Sigmoid colon (tissue), 7 donors: ENCODE measurements at regions of chr3 and their contacts with region 1.

Region 1: GRCh38 chr3:22960105-22960984 is 242.8 kb upstream of the UBE2E2 start:
- DNase-seq: peak; percentile 68
- H3K4me3 ChIP-seq: no peak overlapping the region
- H3K27ac ChIP-seq: no peak overlapping the region
- H3K4me1 ChIP-seq: peaks cover 0 to 11% (median 6%) of the 10 kb centered on the region in 4 donors
- H3K27me3 ChIP-seq: no peaks in the 10 kb centered on the region
- CTCF ChIP-seq: peak; percentile 39 to 73 (median 60)
- EP300 ChIP-seq: no peak
- POLR2A ChIP-seq: no peak

Region 2: DNA sequence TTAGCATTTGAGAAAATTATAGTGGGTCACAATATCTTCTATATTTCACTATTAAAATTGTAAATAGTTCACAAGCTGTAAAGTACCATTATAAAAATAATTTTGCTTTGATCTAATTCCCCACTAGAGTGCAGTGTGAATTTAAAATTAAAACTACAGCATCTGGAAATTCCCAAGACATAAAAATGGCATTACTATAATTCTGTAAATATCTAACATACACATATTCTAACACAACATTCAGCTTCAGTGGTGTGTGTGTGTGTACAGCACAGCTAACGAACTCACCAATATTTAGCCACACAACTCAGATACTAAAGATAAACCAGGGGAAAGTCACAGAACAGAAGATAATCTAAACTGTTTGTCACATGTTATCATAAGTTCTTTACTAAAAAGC is 784.4 kb before region 1 on chr3:
- intact Hi-C with region 1: loop called (anchors 10 kb)
- DNase-seq: no peak
- H3K4me3 ChIP-seq: no peak overlapping the region
- H3K27ac ChIP-seq: no peak overlapping the region
- H3K4me1 ChIP-seq: no peaks in the 10 kb centered on the region
- H3K27me3 ChIP-seq: no peaks in the 10 kb centered on the region
- CTCF ChIP-seq: no peak
- EP300 ChIP-seq: no peak
- POLR2A ChIP-seq: no peak

Region 3: DNA sequence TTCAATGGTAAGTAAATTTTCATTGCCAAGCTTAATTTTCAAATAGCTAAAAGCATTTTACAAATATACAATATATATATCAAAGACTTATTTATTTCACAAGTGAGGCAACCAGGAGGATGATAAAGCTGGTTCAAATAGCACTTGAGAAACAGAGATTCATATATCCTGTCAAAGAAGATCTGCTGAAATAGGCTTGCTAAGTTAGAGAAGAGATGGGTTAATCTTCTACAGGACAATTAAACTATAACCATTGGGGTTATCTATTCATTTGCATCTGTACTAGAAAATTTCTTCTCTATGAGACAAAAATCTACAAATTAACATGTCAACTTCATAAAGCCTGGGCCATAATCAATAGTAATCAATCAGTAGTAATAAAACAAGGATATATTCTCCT is 395.0 kb before region 1 on chr3:
- intact Hi-C with region 1: loop called (anchors 2 kb)
- DNase-seq: no peak
- H3K4me3 ChIP-seq: no peak overlapping the region
- H3K27ac ChIP-seq: no peak overlapping the region
- H3K4me1 ChIP-seq: no peaks in the 10 kb centered on the region
- H3K27me3 ChIP-seq: no peaks in the 10 kb centered on the region
- CTCF ChIP-seq: no peak
- EP300 ChIP-seq: no peak
- POLR2A ChIP-seq: no peak

Region 4: GRCh38 chr3:22908989-22909507 is 51.3 kb before region 1 on chr3:
- intact Hi-C with region 1: loop called (anchors 5 kb)
- DNase-seq: no peak
- H3K4me3 ChIP-seq: no peak overlapping the region
- H3K27ac ChIP-seq: no peak overlapping the region
- H3K4me1 ChIP-seq: peaks cover 0 to 20% (median 11%) of the 10 kb centered on the region in 4 donors
- H3K27me3 ChIP-seq: no peaks in the 10 kb centered on the region
- CTCF ChIP-seq: peak in 2 of 4 experiments; percentile 10 to 44
- EP300 ChIP-seq: no peak
- POLR2A ChIP-seq: no peak

Region 5: GRCh38 chr3:22922317-22922716 is 38.0 kb before region 1 on chr3:
- intact Hi-C with region 1: loop called (anchors 5 kb)
- DNase-seq: no peak
- H3K4me3 ChIP-seq: no peak overlapping the region
- H3K27ac ChIP-seq: no peak overlapping the region
- H3K4me1 ChIP-seq: peaks cover 0 to 3% (median 0%) of the 10 kb centered on the region in 4 donors
- H3K27me3 ChIP-seq: no peaks in the 10 kb centered on the region
- CTCF ChIP-seq: peak in 1 of 4 experiments; percentile 34
- EP300 ChIP-seq: no peak
- POLR2A ChIP-seq: no peak